K562 (cell line): ENCODE measurements at regions of chr15 and their contacts with region 1.

Region 1: GRCh38 chr15:84748274-84749110 is at the start of gene ZNF592:
- DNase-seq: peak; percentile 82 to 92 (median 86)
- ATAC-seq: peak; percentile 66
- H3K4me3 ChIP-seq: peak within 1 kb of the TSS; percentile 91
- H3K27ac ChIP-seq: peak within 1 kb of the TSS; percentile 90
- H3K4me1 ChIP-seq: peaks cover 22 to 29% of the 10 kb centered on the region in 2 experiments; a peak in 4 of 5 replicates
- H3K27me3 ChIP-seq: no peaks in the 10 kb centered on the region
- CTCF ChIP-seq: peak in 2 of 3 experiments; percentile 42 to 76; a peak in 3 of 6 replicates
- EP300 ChIP-seq: no peak
- POLR2A ChIP-seq: no peak
- RAD21 ChIP-seq: peak in 1 of 2 experiments; percentile 34; a peak in 2 of 4 replicates
- polyA plus RNA-seq, gene ZNF592: 0.88 to 1.7 TPM

Region 2: DNA sequence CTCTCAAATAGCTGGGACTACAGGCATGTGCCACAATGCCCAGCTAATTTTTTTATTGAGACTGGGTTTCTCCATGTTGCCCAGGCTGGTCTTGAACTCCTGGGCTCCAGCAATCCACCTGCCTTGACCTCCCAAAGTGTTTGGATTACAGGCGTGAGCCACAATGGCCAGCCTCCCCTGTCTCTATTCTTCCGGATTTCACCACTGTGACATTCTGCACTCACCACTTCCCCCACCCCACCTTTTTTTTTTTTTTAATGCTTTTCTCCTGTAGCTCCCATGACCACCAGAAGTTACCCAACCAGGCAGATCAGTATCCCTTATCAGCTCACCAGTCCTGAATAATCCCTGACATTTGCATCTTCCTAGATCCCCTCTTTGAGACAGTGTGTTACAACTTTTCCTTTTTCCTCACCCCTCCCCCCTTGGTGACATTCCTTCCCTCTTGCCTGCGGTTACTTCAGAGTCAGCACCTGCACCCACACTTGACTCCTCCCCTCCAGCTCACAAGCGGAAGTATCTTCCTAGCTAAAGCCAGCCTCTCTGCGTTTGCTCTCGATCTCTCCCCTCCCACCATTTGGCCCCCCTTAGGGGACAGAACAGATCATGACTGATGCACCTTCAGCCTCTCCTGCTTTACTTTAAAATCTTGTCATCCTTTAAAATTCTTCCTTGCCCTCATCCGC is 13.6 kb before region 1 on chr15:
- CTCF ChIA-PET with region 1: no interaction called
- POLR2A ChIA-PET with region 1: interaction called, 11 read pairs
- in situ Hi-C with region 1: no loop called
- intact Hi-C with region 1: no loop called
- DNase-seq: peak; percentile 80 to 94 (median 84)
- ATAC-seq: peak; percentile 98
- H3K4me3 ChIP-seq: peak overlapping the region; percentile 9; the same call in 1 of the 2 replicates
- H3K27ac ChIP-seq: peak overlapping the region; percentile 76
- H3K4me1 ChIP-seq: peaks cover 10 to 23% of the 10 kb centered on the region in 2 experiments
- H3K27me3 ChIP-seq: no peaks in the 10 kb centered on the region
- CTCF ChIP-seq: no peak
- EP300 ChIP-seq: peak; percentile 81
- POLR2A ChIP-seq: peak; percentile 81
- RAD21 ChIP-seq: peak in 1 of 2 experiments; percentile 32; a peak in 3 of 4 replicates

Region 3: DNA sequence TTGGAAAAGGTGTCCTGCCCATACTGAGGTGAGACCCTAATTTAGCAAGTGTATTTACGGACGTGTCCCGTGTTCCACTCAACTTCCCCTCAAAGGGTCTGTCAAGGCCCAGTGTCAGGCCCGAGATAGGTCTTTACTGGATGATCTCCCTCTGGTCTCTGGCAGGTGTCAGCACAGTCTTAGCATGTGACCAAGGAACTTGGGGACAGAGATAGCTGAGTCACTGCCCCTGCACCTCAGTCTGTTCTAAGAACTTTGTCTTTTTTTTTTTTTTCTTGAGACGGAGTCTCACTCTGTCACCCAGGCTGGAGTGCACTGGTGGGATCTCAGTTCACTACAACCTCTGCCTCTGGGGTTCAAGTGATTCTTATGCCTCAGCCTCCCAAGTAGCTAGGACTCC is 36.6 kb after region 1 on chr15:
- CTCF ChIA-PET with region 1: no interaction called
- POLR2A ChIA-PET with region 1: interaction called, 3 read pairs
- in situ Hi-C with region 1: no loop called
- intact Hi-C with region 1: loop called (anchors 5 kb)
- DNase-seq: peak; percentile 33 to 71 (median 52)
- ATAC-seq: peak; percentile 89
- H3K4me3 ChIP-seq: no peak overlapping the region
- H3K27ac ChIP-seq: peak overlapping the region; percentile 25; the same call in 1 of the 3 replicates
- H3K4me1 ChIP-seq: peaks cover 11 to 12% of the 10 kb centered on the region in 2 experiments; a peak in 4 of 5 replicates
- H3K27me3 ChIP-seq: no peaks in the 10 kb centered on the region
- CTCF ChIP-seq: no peak
- EP300 ChIP-seq: no peak
- POLR2A ChIP-seq: no peak
- RAD21 ChIP-seq: no peak; a peak in 1 of 4 replicates